Posterior vena cava (tissue), 2 donors: ENCODE measurements at regions of chr6 and their contacts with region 1.

Region 1: GRCh38 chr6:143394389-143394788 is 56.1 kb downstream of the ADAT2 start:
- DNase-seq: no peak

Region 2: DNA sequence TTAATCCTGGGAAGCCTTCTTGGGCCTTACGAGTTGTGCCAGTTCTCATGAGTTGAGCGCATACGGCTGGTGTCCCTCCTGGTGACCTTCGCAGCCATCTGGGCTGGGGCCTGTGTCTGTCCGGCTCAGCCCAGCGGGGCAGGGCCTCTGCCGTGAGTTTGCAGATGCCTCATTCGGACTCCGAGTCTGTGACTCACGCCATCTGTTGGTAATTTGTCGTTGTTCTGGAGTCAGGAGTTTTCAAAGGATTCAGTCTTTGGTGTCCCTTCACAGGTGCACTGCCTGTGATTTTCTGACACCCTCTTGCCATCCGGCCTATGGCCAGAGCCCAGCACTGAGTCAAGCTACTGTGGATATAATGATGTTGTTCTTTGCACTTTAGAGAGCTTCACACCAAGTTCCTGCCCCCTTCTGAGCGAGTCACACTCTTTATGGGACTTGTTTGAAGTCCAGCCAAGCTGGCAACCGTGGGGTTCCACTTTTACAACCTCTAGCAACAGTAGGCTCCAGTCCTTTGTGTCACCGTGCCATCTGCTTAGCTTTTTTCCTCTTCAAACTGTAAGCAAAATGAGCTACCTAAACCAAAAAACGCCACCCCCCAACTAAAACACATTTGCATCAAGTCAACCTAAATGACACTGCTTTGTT is 158.1 kb before region 1 on chr6:
- intact Hi-C with region 1: no loop called
- DNase-seq: no peak

Region 3: GRCh38 chr6:143260857-143261256 is 133.5 kb before region 1 on chr6:
- intact Hi-C with region 1: no loop called
- DNase-seq: no peak

Region 4: GRCh38 chr6:143410859-143411270 is 16.5 kb after region 1 on chr6:
- intact Hi-C with region 1: loop called in 1 of 2 experiments (anchors 1 kb)
- DNase-seq: no peak